Naive thymus-derived CD4-positive, alpha-beta T cell (primary cell): ENCODE measurements at regions of chr13 and their contacts with region 1.

Region 1: DNA sequence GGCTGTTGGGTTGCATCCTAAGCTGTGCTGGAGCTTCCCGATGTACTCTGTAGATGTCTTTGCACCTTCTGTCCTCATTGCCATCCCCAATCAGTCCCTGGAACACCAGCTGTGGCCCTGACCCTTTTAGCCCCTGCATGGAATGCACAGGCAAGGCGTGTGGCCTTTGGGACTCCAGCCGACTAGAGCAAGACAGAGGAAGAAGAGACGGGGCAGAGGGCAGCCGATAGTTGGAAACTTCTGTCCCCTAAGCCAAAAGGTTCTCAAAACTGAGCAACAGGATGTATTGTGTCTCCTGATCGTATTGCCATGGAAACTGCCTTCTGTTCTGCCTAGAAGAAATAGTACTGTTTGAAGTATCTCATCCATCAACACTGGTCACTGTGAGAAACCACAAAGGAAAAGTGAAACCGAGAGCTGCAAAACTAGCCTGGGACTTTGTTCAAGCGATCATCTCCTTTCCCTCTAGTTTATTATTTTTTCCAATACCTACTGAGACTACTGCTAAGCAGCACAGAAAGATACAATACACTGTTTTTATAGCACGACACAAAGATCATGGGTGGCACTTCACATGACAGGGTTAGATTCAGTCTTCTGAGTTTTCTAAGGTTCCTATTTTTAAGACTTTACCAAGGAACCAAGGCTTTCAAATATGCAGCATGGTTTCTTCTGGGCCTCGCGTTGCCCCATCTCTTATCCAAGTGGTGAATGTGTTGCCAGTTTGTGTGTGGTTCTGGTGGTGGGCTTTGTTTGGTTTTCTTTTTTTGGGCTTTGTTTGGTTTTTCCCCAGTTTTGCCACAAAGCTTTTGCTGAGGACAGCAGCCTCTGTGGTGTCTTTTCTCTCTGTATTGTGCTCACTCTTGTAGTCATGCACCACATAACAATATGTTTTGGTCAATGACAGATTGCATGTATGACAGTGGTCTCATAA is 49.2 kb upstream of the GPR183 start:
- DNase-seq: peak in 8 of 9 donors; percentile 58 to 94 (median 92)
- ATAC-seq: peak; percentile 77
- H3K4me3 ChIP-seq: peak overlapping the region; percentile 25
- H3K4me3 Mint-ChIP-seq: peak overlapping the region; percentile 66 to 86 (median 78)
- H3K27ac ChIP-seq: peak overlapping the region; percentile 95
- H3K27ac Mint-ChIP-seq: peak overlapping the region; percentile 97 to 100 (median 99)
- H3K4me1 ChIP-seq: peaks cover 95 to 97% of the 10 kb centered on the region in 2 donors
- H3K4me1 Mint-ChIP-seq: peaks cover 78 to 100% (median 100%) of the 10 kb centered on the region in 7 donors
- H3K27me3 ChIP-seq: no peaks in the 10 kb centered on the region
- H3K27me3 Mint-ChIP-seq: no peaks in the 10 kb centered on the region

Region 2: GRCh38 chr13:98910501-98910951 is 445.9 kb before region 1 on chr13:
- CTCF ChIA-PET with region 1: no interaction called
- POLR2A ChIA-PET with region 1: no interaction called
- intact Hi-C with region 1: loop called in 1 of 2 experiments (anchors 1 kb)
- DNase-seq: peak in 8 of 9 donors; percentile 13 to 59 (median 50)
- ATAC-seq: peak; percentile 71
- H3K4me3 ChIP-seq: no peak overlapping the region
- H3K4me3 Mint-ChIP-seq: peak overlapping the region in 9 of 10 donors; percentile 5 to 82 (median 69)
- H3K27ac ChIP-seq: no peak overlapping the region
- H3K27ac Mint-ChIP-seq: peak overlapping the region; percentile 75 to 96 (median 90)
- H3K4me1 ChIP-seq: peaks cover 9 to 10% of the 10 kb centered on the region in 2 donors
- H3K4me1 Mint-ChIP-seq: peaks cover 12 to 53% (median 47%) of the 10 kb centered on the region in 7 donors
- H3K27me3 ChIP-seq: no peaks in the 10 kb centered on the region
- H3K27me3 Mint-ChIP-seq: no peaks in the 10 kb centered on the region

Region 3: GRCh38 chr13:99281811-99282263 is 74.6 kb before region 1 on chr13:
- CTCF ChIA-PET with region 1: interaction called, 4 read pairs
- POLR2A ChIA-PET with region 1: interaction called, 12 read pairs
- intact Hi-C with region 1: loop called in 1 of 2 experiments (anchors 1 kb)
- DNase-seq: peak in 7 of 9 donors; percentile 45 to 65 (median 55)
- ATAC-seq: peak; percentile 85
- H3K4me3 ChIP-seq: peak overlapping the region; percentile 10
- H3K4me3 Mint-ChIP-seq: peak overlapping the region; percentile 36 to 85 (median 72)
- H3K27ac ChIP-seq: peak overlapping the region; percentile 73
- H3K27ac Mint-ChIP-seq: peak overlapping the region; percentile 86 to 99 (median 97)
- H3K4me1 ChIP-seq: peaks cover 83 to 87% of the 10 kb centered on the region in 2 donors
- H3K4me1 Mint-ChIP-seq: peaks cover 64 to 99% (median 94%) of the 10 kb centered on the region in 7 donors
- H3K27me3 ChIP-seq: no peaks in the 10 kb centered on the region
- H3K27me3 Mint-ChIP-seq: no peaks in the 10 kb centered on the region

Region 4: GRCh38 chr13:99322297-99323103 is 33.9 kb before region 1 on chr13:
- CTCF ChIA-PET with region 1: interaction called, 3 read pairs
- POLR2A ChIA-PET with region 1: interaction called, 12 read pairs
- intact Hi-C with region 1: loop called (anchors 1 kb)
- DNase-seq: peak in 6 of 9 donors; percentile 35 to 64 (median 48)
- ATAC-seq: peak; percentile 81
- H3K4me3 ChIP-seq: peak overlapping the region; percentile 2
- H3K4me3 Mint-ChIP-seq: peak overlapping the region; percentile 51 to 84 (median 67)
- H3K27ac ChIP-seq: peak overlapping the region; percentile 77
- H3K27ac Mint-ChIP-seq: peak overlapping the region; percentile 88 to 99 (median 95)
- H3K4me1 ChIP-seq: peaks cover 65 to 66% of the 10 kb centered on the region in 2 donors
- H3K4me1 Mint-ChIP-seq: peaks cover 38 to 95% (median 75%) of the 10 kb centered on the region in 7 donors
- H3K27me3 ChIP-seq: no peaks in the 10 kb centered on the region
- H3K27me3 Mint-ChIP-seq: no peaks in the 10 kb centered on the region

Region 5: DNA sequence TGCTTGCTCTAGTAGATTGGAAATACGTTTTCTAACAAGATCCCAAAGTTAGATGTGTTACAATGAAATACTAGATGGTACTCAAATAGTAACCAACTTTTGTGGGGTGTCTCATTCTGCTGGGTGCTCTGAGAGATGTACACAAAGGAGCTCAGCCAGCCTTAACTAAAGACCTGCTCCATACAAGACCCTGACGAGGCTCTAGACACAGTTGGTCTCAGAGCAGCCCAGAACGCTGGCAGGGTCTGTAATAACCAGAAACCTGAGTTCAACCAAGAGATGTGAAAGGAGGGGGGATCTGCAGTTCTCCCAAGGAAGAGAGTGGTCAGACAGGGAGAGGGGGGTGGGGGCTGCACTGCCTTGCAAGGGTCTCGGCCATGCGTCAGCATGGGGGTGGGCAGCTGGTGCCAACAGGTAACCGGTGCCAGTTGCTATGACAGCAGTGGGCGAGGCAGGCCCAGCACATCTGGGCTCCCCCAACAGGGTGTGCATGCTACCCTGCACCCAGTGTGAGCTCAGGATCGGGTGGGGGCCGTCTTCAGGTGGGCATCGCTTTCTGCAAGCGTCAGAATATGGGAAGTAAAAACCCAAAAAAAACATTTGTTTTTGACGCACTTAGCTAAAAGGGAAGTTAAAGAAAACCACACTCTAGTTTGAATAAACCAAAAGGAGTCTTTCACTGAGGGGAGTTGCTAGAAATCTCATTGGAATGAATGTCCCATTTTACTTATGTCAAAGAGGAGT is 18.7 kb after region 1 on chr13:
- CTCF ChIA-PET with region 1: interaction called, 34 read pairs
- POLR2A ChIA-PET with region 1: interaction called, 167 read pairs
- intact Hi-C with region 1: loop called (anchors 1 kb)
- DNase-seq: peak; percentile 20 to 93 (median 87)
- ATAC-seq: peak; percentile 94
- H3K4me3 ChIP-seq: peak overlapping the region; percentile 38
- H3K4me3 Mint-ChIP-seq: peak overlapping the region; percentile 50 to 87 (median 72)
- H3K27ac ChIP-seq: peak overlapping the region; percentile 88
- H3K27ac Mint-ChIP-seq: peak overlapping the region; percentile 87 to 100 (median 99)
- H3K4me1 ChIP-seq: peaks cover 67 to 84% of the 10 kb centered on the region in 2 donors
- H3K4me1 Mint-ChIP-seq: peaks cover 60 to 100% (median 95%) of the 10 kb centered on the region in 7 donors
- H3K27me3 ChIP-seq: no peaks in the 10 kb centered on the region
- H3K27me3 Mint-ChIP-seq: no peaks in the 10 kb centered on the region

Region 6: GRCh38 chr13:99417201-99418102 is 61.0 kb after region 1 on chr13:
- CTCF ChIA-PET with region 1: interaction called, 7 read pairs
- POLR2A ChIA-PET with region 1: interaction called, 10 read pairs
- intact Hi-C with region 1: loop called in 1 of 2 experiments (anchors 2 kb)
- DNase-seq: peak in 7 of 9 donors; percentile 58 to 78 (median 77)
- ATAC-seq: peak; percentile 40
- H3K4me3 ChIP-seq: peak overlapping the region; percentile 65
- H3K4me3 Mint-ChIP-seq: peak overlapping the region in 1 of 10 donors; percentile 50
- H3K27ac ChIP-seq: peak overlapping the region; percentile 91
- H3K27ac Mint-ChIP-seq: peak overlapping the region in 1 of 9 donors; percentile 26
- H3K4me1 ChIP-seq: peaks cover 18 to 78% of the 10 kb centered on the region in 2 donors
- H3K4me1 Mint-ChIP-seq: peaks cover 32 to 64% (median 49%) of the 10 kb centered on the region in 7 donors
- H3K27me3 ChIP-seq: no peaks in the 10 kb centered on the region
- H3K27me3 Mint-ChIP-seq: peaks cover 0 to 4% (median 0%) of the 10 kb centered on the region in 5 donors